Activated CD8-positive, alpha-beta T cell treated with anti-CD3 and anti-CD28 coated beads, Interleukin-2, amount 10 ng/mL, durations not matched to agents 7 days and 5 days (primary cell): ENCODE measurements at regions of chr2 and their contacts with region 1.

Region 1: DNA sequence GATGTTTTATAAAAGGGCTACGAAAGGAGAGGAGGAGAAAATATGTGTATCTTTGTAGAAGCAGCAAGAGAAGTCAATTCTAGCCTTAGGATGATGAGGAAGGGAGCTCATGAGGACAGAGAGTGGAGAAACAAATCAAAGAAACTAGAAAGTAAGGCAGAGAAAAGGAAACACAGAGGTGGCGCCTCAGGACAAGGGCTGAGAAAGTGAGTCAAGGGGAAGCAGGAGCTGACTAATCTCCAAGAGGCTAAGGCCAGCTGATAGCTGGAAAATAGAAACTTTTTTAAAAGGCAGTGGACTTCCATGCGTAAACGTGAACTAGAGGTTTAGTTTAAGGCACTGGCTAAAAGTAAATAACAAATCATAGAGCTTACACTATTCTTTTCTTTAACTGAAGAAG is 173.3 kb downstream of the ANKRD44 start:
- DNase-seq: no peak
- ATAC-seq: no peak
- H3K4me3 Mint-ChIP-seq: no peak overlapping the region
- H3K27ac Mint-ChIP-seq: peak overlapping the region; percentile 17
- H3K4me1 Mint-ChIP-seq: peaks cover 88% of the 10 kb centered on the region
- H3K27me3 Mint-ChIP-seq: no peaks in the 10 kb centered on the region

Region 2: DNA sequence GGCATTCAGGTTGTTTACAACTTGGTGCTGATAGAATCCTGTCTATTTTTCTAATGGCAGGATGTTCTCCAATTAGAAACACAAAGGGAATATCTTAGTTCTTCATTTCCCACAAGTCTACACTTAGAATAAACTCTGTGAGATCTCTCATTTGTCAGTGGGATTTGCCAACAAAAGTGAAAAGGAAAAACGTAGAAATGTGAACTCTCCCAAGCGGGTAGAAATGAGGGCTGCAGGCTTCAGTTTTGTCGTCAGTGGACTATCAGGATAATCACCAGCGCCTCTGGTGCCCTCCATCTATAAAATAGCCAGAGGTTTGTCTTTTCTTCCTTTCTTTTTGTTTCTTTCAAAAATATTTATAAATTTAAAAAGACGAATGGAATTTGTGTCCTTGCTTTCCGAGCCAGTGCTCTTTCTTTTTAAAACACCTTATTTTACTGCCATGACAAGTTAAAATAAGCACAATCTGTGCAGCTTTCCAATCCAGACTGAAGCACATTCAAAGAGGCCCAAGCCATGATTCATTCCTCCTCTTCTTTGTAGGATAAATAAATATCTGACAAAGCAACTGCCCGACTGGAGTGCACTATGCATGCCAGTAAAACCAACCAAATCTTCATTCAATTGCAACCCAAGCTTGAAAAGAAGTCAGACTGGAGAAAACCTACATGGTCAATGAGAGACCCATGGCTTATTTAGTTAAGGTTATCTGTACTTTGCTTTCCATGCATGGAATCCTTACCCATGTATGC is 12.4 kb before region 1 on chr2:
- CTCF ChIA-PET with region 1: interaction called, 12 read pairs
- POLR2A ChIA-PET with region 1: interaction called, 7 read pairs
- DNase-seq: no peak
- ATAC-seq: no peak
- H3K4me3 Mint-ChIP-seq: no peak overlapping the region
- H3K27ac Mint-ChIP-seq: no peak overlapping the region
- H3K4me1 Mint-ChIP-seq: peaks cover 51% of the 10 kb centered on the region
- H3K27me3 Mint-ChIP-seq: no peaks in the 10 kb centered on the region

Region 3: DNA sequence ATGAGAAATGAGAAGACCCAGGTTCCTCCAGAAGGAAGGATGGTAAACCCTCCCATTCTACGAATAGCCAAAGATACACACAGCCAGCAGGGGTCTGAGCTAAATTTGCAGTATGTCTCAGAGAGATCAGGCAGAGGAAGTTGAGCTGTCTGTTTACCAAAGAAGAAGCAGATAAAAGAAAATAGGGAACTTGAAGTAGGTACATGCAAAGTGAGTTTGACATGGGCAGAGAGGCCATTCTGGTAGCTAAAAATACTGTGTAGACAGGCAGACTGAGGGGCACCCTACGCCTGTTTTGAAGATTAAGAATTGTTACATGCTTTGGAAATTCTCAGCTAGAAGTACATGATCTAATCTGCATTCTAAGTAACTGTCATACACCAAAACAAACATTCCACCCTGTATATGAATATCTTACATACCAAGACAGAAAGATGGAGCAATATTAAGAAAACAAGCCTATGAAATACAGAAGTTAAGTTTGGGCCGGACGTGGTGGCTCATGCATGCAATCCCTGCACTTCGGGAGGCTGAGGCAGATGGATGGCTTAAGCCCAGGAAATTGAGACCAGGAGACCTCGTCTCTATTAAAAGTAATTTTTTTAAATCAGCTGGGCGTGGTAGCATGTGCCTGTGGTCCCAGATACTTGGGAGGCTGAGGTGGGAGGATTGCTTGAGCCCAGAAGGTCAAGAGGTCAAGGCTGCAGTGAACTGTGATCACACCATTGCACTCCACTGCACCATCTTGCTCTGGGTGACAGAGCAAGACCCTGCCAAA is 15.4 kb after region 1 on chr2:
- CTCF ChIA-PET with region 1: interaction called, 10 read pairs
- POLR2A ChIA-PET with region 1: interaction called, 5 read pairs
- DNase-seq: no peak
- ATAC-seq: peak; percentile 64
- H3K4me3 Mint-ChIP-seq: no peak overlapping the region
- H3K27ac Mint-ChIP-seq: peak overlapping the region; percentile 45
- H3K4me1 Mint-ChIP-seq: peaks cover 69% of the 10 kb centered on the region
- H3K27me3 Mint-ChIP-seq: no peaks in the 10 kb centered on the region

Region 4: DNA sequence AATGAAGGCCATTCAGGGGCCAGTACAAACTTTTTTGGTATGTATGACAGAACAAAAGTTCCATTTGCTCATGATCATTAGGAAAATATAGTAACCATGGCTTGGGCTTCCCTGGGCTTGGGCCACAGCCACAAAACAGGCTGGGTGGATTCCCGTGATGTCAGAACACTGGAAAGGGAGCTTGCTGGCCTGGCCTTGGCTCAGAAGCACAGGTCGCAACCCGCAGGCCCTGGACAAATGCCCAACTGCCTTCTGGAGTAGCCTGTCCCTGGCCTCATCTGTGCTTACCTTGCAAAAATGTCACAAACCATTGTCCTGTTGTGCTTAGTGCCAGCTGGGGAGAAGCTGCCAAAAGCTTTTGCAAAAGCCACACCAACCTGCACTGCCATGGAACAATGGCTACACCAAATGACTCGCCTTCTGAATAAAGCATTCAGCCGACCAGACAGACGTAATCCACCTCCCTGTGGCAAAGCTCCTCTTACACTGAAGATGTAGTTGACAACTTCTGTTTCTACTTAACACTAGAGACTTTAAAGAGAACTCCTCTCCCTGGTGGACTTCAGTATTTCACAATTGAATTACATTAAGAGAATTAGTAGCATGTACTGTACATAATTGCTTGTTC is 47.8 kb after region 1 on chr2:
- CTCF ChIA-PET with region 1: no interaction called
- POLR2A ChIA-PET with region 1: no interaction called
- DNase-seq: no peak
- ATAC-seq: no peak
- H3K4me3 Mint-ChIP-seq: no peak overlapping the region
- H3K27ac Mint-ChIP-seq: no peak overlapping the region
- H3K4me1 Mint-ChIP-seq: peaks cover 61% of the 10 kb centered on the region
- H3K27me3 Mint-ChIP-seq: no peaks in the 10 kb centered on the region